PC-3 (cell line): ENCODE measurements at regions of chr12 and their contacts with region 1.

Region 1: GRCh38 chr12:124992874-124993625 is 395 bp upstream of the BRI3BP start:
- DNase-seq: peak; percentile 89
- ATAC-seq: peak; percentile 19
- H3K4me3 ChIP-seq: peak overlapping the region; percentile 66
- H3K27ac ChIP-seq: 0 out of 2 replicates have a peak overlapping the region, but pooled peaks have one; percentile 7
- H3K4me1 ChIP-seq: peaks cover 21% of the 10 kb centered on the region
- H3K27me3 ChIP-seq: no peaks in the 10 kb centered on the region
- CTCF ChIP-seq: peak; percentile 71

Region 2: DNA sequence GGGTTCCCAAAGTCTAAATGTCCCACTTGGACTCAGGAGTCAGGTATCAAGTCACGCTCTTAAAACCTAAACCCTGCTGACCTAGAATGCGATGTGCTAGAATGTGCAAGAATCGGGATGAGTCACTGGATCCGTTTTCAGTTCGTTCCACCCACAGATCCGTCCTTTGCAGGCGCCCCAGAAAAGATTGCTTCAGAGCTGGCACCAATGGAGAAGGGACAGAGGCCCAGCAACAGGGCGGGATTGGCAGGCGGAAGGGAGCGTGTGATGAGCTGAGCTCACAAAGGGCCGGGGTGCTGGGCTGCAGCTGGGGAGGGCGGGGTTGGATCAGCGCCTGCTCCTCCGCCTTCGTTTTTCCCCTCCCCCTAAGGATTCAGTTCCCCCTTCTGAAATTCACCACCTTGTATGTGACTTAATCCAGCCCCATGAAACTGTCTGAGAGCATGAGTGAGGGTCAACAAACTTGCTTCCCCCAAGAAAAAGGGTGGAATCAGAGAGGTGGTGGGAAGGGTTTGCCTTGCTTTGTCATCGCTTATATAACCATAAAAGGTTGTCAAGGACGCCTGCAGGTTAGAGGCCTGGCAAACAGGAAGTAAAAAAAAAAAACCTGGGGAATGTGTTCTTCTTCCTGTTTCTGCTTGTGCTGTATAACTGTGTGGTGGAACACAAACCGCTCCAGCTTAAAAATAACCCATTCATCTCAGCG is 75.8 kb before region 1 on chr12:
- CTCF ChIA-PET with region 1: interaction called, 4 read pairs
- POLR2A ChIA-PET with region 1: no interaction called
- intact Hi-C with region 1: loop called (anchors 5 kb)
- DNase-seq: peak; percentile 100
- ATAC-seq: peak; percentile 72
- H3K4me3 ChIP-seq: peak overlapping the region; percentile 94
- H3K27ac ChIP-seq: peak overlapping the region; percentile 98
- H3K4me1 ChIP-seq: peaks cover 53% of the 10 kb centered on the region
- H3K27me3 ChIP-seq: no peaks in the 10 kb centered on the region
- CTCF ChIP-seq: no peak

Region 3: GRCh38 chr12:124940549-124941527 is 52.2 kb before region 1 on chr12:
- CTCF ChIA-PET with region 1: interaction called, 7 read pairs
- POLR2A ChIA-PET with region 1: no interaction called
- intact Hi-C with region 1: loop called (anchors 1 kb)
- DNase-seq: peak; percentile 97
- ATAC-seq: peak; percentile 54
- H3K4me3 ChIP-seq: peak overlapping the region; percentile 71
- H3K27ac ChIP-seq: peak overlapping the region; percentile 61
- H3K4me1 ChIP-seq: peaks cover 24% of the 10 kb centered on the region
- H3K27me3 ChIP-seq: no peaks in the 10 kb centered on the region
- CTCF ChIP-seq: peak; percentile 95

Region 4: DNA sequence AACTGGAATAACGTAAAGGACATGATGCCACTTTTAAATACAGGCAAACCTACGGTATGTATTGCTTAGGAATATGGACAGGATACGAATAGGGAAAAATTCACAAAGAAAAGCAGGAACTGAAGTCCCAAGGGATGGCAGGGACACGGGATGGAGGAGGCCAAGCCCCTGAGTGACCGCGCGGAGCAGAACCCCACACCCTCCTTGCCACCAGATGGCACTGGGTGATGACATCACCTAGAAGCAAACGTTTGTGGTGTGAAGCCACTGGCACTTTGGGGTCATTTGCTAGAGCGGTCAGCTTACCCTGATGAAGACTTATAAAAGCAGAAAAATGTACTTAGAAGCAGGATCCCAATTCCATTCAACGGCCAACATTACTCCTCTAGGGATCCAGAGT is 13.5 kb before region 1 on chr12:
- CTCF ChIA-PET with region 1: no interaction called
- POLR2A ChIA-PET with region 1: no interaction called
- intact Hi-C with region 1: no loop called
- DNase-seq: no peak
- ATAC-seq: no peak
- H3K4me3 ChIP-seq: no peak overlapping the region
- H3K27ac ChIP-seq: no peak overlapping the region
- H3K4me1 ChIP-seq: no peaks in the 10 kb centered on the region
- H3K27me3 ChIP-seq: no peaks in the 10 kb centered on the region
- CTCF ChIP-seq: no peak

Region 5: GRCh38 chr12:125015680-125016310 is 22.7 kb after region 1 on chr12:
- CTCF ChIA-PET with region 1: no interaction called
- POLR2A ChIA-PET with region 1: no interaction called
- intact Hi-C with region 1: no loop called
- DNase-seq: no peak
- ATAC-seq: no peak
- H3K4me3 ChIP-seq: no peak overlapping the region
- H3K27ac ChIP-seq: no peak overlapping the region
- H3K4me1 ChIP-seq: no peaks in the 10 kb centered on the region
- H3K27me3 ChIP-seq: no peaks in the 10 kb centered on the region
- CTCF ChIP-seq: no peak

Region 6: GRCh38 chr12:125049093-125049458 is 56.0 kb after region 1 on chr12:
- CTCF ChIA-PET with region 1: no interaction called
- POLR2A ChIA-PET with region 1: no interaction called
- intact Hi-C with region 1: loop called (anchors 5 kb)
- DNase-seq: no peak
- ATAC-seq: peak; percentile 10
- H3K4me3 ChIP-seq: peak overlapping the region; percentile 78
- H3K27ac ChIP-seq: no peak overlapping the region
- H3K4me1 ChIP-seq: no peaks in the 10 kb centered on the region
- H3K27me3 ChIP-seq: no peaks in the 10 kb centered on the region
- CTCF ChIP-seq: no peak

Region 7: GRCh38 chr12:125065021-125065795 is 72.2 kb after region 1 on chr12 and contains the start of gene AACS:
- CTCF ChIA-PET with region 1: no interaction called
- POLR2A ChIA-PET with region 1: interaction called, 9 read pairs
- intact Hi-C with region 1: loop called (anchors 2 kb)
- DNase-seq: peak; percentile 72
- ATAC-seq: peak; percentile 92
- H3K4me3 ChIP-seq: peak within 1 kb of the TSS; percentile 98
- H3K27ac ChIP-seq: no peak within 1 kb of the TSS
- H3K4me1 ChIP-seq: peaks cover 22% of the 10 kb centered on the region
- H3K27me3 ChIP-seq: no peaks in the 10 kb centered on the region
- CTCF ChIP-seq: no peak
- total RNA-seq, gene AACS: 31.9 and 37.6 TPM in 2 replicates

Region 8: DNA sequence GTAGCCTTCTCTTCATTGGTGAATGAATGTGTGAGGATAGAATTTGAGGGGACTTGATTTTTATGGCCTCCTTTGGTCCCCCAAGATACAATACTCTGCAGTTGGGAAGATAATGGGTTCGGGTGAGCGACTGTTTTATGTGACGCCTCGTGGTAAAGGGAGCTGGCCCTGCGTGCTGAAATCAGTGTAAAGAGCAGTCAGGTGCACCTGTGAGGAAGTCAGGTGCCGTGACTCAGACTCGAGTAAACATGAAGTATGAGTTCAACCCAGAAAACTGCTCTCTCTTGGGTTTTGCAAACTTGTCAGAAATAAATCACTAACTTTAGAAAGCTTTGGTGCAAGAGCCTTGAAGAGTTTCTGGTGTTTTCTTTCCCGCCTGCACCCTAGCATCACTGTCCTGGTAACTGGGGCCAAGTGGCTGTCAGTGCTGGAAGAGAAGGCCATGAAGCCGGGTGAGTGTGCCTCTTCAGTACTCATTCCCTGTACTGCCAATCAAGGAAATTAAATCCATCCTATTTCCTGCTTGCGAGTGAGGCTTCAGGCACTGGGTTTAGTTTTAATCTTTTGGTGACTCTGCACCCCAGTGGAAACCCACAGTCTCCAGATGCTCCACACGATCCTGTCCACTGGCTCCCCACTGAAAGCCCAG is 131.4 kb after region 1 on chr12:
- CTCF ChIA-PET with region 1: no interaction called
- POLR2A ChIA-PET with region 1: no interaction called
- intact Hi-C with region 1: loop called (anchors 5 kb)
- DNase-seq: peak; percentile 85
- ATAC-seq: peak; percentile 85
- H3K4me3 ChIP-seq: no peak overlapping the region
- H3K27ac ChIP-seq: peak overlapping the region; percentile 79
- H3K4me1 ChIP-seq: peaks cover 23% of the 10 kb centered on the region
- H3K27me3 ChIP-seq: no peaks in the 10 kb centered on the region
- CTCF ChIP-seq: no peak

Region 9: GRCh38 chr12:125220404-125220803 is 227.4 kb after region 1 on chr12:
- CTCF ChIA-PET with region 1: no interaction called
- POLR2A ChIA-PET with region 1: no interaction called
- intact Hi-C with region 1: no loop called
- DNase-seq: no peak
- ATAC-seq: peak; percentile 13; the same call in 1 of the 2 replicates
- H3K4me3 ChIP-seq: no peak overlapping the region
- H3K27ac ChIP-seq: no peak overlapping the region
- H3K4me1 ChIP-seq: no peaks in the 10 kb centered on the region
- H3K27me3 ChIP-seq: peaks cover 90% of the 10 kb centered on the region
- CTCF ChIP-seq: no peak